ENCODE measurements at regions of chr1 and their contacts with region 1.

Region 1: GRCh38 chr1:110619412-110620249 is 13.5 kb upstream of the KCNA2 start:
- DNase-seq: peak; percentile 23 to 45
- ATAC-seq: peak in 1 of 2 donors; percentile 33
- H3K4me3 ChIP-seq: no peak overlapping the region
- H3K27ac ChIP-seq: no peak overlapping the region
- H3K4me1 ChIP-seq: no peaks in the 10 kb centered on the region
- H3K27me3 ChIP-seq: peaks cover 13 to 32% (median 16%) of the 10 kb centered on the region in 3 donors
- CTCF ChIP-seq: peak; percentile 62 to 88 (median 79)
- POLR2A ChIP-seq: no peak

Region 2: DNA sequence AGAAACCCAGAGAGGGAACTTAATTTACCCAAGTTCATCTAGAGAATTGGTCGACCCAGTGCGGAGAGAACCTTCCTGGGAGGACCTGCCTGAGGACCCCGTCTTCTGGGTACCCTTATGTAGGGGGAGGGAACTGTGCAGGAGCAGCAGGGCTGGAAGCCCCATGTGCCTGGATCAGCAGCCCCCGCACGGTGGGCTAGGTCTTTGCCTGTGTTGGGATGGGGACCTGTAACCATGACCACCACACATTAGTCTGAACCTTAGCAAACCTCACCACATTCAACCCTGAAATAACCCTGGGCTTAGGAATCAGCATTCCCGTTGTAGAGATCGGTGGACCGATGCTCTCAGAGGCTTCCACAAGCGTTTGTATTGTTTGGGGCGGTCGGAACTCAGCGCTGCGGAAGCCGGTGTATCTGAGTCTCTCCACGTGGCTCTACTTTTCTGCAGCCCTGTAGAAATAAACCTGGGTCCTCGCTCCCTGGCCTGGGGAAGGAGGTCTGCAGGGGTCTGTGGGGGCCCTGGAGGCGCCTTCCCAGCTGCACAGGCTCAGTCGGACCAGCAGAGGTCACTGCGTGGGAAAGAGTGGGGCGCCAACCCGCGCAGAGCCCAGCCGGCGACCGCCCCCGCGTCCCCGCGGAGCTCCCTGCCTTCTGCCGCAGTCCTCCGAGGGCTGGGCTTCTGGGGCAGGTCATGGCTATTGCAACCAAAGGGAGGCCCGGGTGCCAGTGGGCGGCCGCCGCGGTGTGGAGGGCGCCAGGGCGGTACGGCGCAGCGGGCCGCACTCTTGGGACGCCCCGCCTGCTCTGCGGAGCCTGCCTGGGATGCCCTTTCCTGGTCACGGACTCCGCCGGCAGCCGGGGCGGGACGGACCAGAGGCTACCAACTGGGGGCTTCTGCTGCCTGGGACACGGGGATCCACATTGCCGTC is 64.5 kb before region 1 on chr1:
- in situ Hi-C with region 1: loop called in 2 of 4 experiments (anchors 5 to 10 kb)
- intact Hi-C with region 1: loop called (anchors 1 kb)
- DNase-seq: no peak
- ATAC-seq: peak; percentile 56 to 67
- H3K4me3 ChIP-seq: peak overlapping the region; percentile 39 to 56 (median 48)
- H3K27ac ChIP-seq: peak overlapping the region in 1 of 4 donors; percentile 23
- H3K4me1 ChIP-seq: no peaks in the 10 kb centered on the region
- H3K27me3 ChIP-seq: peaks cover 5 to 13% (median 10%) of the 10 kb centered on the region in 3 donors
- CTCF ChIP-seq: peak; percentile 35 to 73 (median 66)
- POLR2A ChIP-seq: no peak

Region 3: DNA sequence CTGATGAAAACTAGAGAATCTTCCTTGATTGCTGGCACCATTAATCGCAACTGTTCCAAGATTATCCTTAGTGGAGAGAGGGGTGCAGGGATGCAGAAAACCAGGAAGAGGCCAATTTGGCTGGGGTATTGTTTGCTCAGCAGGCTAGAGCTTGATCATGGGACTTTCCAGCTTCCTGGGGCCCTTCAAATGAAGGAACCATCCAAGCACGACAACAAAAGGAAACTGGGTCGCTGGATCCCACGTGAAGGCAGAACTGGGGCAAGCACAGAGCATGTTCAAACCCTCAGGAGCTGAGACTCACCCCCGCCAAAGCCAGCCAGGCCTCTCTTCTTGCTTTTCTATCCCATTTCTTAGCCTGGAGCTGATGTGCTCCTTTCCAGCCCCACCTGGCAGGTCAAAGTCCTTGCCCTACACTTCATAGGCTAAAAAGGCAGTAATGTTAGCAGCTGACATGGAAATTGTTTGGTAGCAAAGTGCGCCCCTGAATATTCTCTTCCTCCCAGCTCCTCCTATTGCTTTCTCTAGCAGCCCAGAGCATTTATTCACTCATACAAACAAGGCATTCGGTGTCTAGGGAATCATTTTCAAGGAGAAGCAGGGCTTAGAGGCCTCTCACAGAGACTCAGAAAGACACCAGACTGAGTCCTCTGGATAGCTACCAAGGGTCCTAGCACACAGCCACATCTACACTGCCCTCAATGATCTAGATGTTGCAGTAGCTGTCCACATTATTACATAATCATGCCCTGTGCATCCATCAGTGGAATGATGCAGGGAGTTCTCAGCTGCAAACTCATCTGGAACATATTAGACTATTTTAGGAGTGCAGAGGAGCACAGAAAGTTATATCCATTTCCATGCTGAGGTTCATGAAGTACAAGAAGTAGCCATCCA is 24.9 kb before region 1 on chr1:
- in situ Hi-C with region 1: no loop called
- intact Hi-C with region 1: no loop called
- DNase-seq: no peak
- ATAC-seq: peak in 1 of 2 donors; percentile 21
- H3K4me3 ChIP-seq: no peak overlapping the region
- H3K27ac ChIP-seq: no peak overlapping the region
- H3K4me1 ChIP-seq: no peaks in the 10 kb centered on the region
- H3K27me3 ChIP-seq: no peaks in the 10 kb centered on the region
- CTCF ChIP-seq: no peak
- POLR2A ChIP-seq: no peak

Region 4: DNA sequence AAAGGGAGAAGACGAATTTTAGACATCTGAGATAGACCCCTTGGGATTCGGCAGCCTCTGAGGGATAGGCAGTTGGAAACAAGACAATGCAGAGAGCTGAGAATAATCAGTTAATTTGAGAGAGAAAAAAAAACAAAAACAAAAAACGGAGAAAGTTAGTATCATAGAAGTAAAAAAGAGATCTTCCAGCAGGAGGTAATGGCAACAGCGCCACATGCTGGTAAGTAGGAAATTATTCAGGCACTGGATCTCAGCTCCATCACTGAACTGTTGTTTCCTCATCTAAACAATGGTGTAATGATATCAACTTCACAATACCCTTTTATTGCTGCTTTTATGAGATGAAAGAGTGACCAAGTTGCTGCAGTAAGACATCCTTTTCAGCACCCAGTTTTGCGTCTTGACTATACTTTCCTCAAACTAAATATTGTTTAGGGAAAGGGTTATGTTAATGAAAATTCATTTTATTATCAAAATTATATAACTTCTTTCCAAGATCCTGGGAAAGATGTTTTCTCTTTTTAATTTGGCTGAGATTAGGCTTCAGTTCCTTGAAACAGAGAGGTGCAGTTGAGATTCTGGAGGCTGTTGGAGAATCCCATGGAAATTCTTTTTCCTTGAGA is 146.5 kb after region 1 on chr1:
- in situ Hi-C with region 1: no loop called
- intact Hi-C with region 1: loop called (anchors 5 kb)
- DNase-seq: no peak
- ATAC-seq: no peak
- H3K4me3 ChIP-seq: no peak overlapping the region
- H3K27ac ChIP-seq: no peak overlapping the region
- H3K4me1 ChIP-seq: no peaks in the 10 kb centered on the region
- H3K27me3 ChIP-seq: peaks cover 0 to 2% (median 0%) of the 10 kb centered on the region in 3 donors
- CTCF ChIP-seq: peak in 4 of 5 experiments; percentile 34 to 68 (median 55)
- POLR2A ChIP-seq: no peak

Region 5: DNA sequence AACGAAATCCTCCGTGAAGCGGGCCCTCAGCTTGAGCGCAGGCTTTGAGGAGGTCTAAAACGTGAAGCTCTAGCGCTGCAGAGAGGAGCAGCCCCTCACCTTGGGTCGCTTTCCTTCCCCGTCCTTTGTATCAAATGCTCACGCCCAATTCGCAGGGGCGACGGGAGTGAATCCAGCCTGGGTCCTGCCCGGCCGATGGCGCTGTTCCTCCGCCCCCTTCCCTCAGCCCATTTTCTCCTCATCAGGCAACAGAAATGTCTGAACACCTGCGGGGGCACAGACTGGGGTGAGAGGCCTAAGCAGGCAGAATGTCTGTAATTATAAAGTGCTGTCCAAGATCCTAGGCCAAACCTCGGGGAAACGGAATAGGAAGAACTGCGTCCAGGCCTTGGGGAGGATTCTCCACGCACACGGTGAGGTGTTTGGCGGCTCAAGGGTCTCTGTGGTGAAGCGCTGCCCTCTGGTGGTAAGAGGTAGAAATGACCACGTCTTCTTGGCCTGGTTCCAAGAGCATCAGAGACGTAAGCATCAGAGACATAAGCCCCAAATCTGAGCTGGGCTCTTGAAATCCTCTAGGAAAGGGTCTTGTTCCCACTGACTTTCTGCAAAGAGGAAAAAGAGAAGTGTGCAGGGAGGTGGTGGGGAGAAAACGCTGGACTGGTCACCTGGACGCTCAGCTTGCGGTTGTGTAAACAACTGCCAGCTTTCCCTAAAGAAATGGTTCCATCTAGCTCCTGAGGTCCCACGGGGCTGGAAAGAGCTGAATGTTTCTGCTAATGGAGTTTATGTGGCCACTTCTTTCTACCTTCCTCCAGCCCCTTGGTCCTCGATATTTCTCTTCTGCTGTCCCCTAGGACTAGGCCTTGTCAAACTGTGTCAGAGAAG is 161.2 kb after region 1 on chr1:
- in situ Hi-C with region 1: loop called in 1 of 4 experiments (anchors 5 kb)
- intact Hi-C with region 1: loop called (anchors 5 kb)
- DNase-seq: peak; percentile 37 to 40
- ATAC-seq: peak; percentile 52 to 58
- H3K4me3 ChIP-seq: no peak overlapping the region
- H3K27ac ChIP-seq: no peak overlapping the region
- H3K4me1 ChIP-seq: no peaks in the 10 kb centered on the region
- H3K27me3 ChIP-seq: no peaks in the 10 kb centered on the region
- CTCF ChIP-seq: peak; percentile 46 to 79 (median 69)
- POLR2A ChIP-seq: no peak

Measured in gastrocnemius medialis (tissue), 4 donors.